Activated CD4-positive, alpha-beta T cell treated with anti-CD3 and anti-CD28 coated beads for 36 hours (primary cell): ENCODE measurements at regions of chr3 and their contacts with region 1.

Region 1: DNA sequence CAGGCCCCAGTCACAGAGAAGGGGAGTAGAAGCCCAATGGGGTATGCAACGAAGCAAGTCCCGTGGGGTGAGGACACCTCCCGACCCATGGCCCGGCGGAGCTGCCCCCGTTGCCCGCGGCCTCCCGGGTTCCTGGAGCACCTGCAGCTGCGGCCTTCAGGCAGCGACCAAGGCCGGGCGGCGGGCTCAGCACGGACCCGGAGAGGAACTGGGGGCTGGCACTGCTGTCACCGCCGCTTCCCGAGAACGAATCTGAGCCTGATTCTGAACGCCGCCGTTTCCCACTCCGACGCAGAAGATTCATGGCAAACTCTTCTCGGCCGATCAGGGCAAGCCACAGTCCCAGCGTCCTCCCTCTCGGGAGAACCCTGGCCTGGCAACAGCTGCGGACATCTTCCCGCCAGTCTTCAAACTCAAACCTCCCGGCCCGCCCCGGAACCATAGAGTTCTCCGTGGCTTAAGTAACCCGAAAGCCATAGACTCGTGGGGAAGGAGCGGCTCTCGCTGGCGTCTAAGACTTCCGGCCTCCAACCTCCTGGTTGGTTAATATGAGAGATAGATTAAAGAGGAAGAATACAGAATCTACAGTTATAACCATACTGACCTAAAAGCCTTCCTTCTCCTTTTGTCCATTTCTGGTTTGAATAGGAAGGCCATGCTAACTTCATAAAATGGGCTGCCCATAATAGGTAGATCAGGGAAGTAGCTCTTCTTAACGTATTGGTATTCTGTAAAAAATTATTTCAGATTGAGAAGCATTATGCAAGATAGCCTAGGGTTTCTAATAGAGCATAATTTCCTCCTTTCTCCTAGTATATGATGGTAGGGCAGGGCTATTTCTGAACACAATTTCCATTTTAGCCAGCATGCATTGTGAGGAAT is at the start of gene POLQ:
- DNase-seq: peak; percentile 92
- ATAC-seq: peak; percentile 98
- H3K4me3 Mint-ChIP-seq: peak within 1 kb of the TSS; percentile 91
- H3K27ac Mint-ChIP-seq: peak within 1 kb of the TSS; percentile 94
- H3K4me1 Mint-ChIP-seq: peaks cover 4% of the 10 kb centered on the region
- H3K27me3 Mint-ChIP-seq: no peaks in the 10 kb centered on the region
- total RNA-seq, gene POLQ: 22.8 to 23.4 TPM

Region 2: GRCh38 chr3:121592856-121593702 is 47.3 kb after region 1 on chr3 and contains the start of gene FBXO40:
- CTCF ChIA-PET with region 1: no interaction called
- POLR2A ChIA-PET with region 1: no interaction called
- intact Hi-C with region 1: no loop called
- DNase-seq: no peak
- ATAC-seq: no peak
- H3K4me3 Mint-ChIP-seq: no peak within 1 kb of the TSS
- H3K27ac Mint-ChIP-seq: no peak within 1 kb of the TSS
- H3K4me1 Mint-ChIP-seq: no peaks in the 10 kb centered on the region
- H3K27me3 Mint-ChIP-seq: peaks cover 2% of the 10 kb centered on the region
- total RNA-seq, gene FBXO40: not detected

Region 3: GRCh38 chr3:121660356-121661171 is 114.7 kb after region 1 on chr3 and contains the start of gene HCLS1:
- CTCF ChIA-PET with region 1: interaction called, 4 read pairs
- POLR2A ChIA-PET with region 1: no interaction called
- intact Hi-C with region 1: loop called (anchors 1 kb)
- DNase-seq: peak; percentile 83
- ATAC-seq: peak; percentile 88
- H3K4me3 Mint-ChIP-seq: peak within 1 kb of the TSS; percentile 95
- H3K27ac Mint-ChIP-seq: peak within 1 kb of the TSS; percentile 97
- H3K4me1 Mint-ChIP-seq: peaks cover 50% of the 10 kb centered on the region
- H3K27me3 Mint-ChIP-seq: no peaks in the 10 kb centered on the region
- total RNA-seq, gene HCLS1: 200 to 235 TPM

Region 4: DNA sequence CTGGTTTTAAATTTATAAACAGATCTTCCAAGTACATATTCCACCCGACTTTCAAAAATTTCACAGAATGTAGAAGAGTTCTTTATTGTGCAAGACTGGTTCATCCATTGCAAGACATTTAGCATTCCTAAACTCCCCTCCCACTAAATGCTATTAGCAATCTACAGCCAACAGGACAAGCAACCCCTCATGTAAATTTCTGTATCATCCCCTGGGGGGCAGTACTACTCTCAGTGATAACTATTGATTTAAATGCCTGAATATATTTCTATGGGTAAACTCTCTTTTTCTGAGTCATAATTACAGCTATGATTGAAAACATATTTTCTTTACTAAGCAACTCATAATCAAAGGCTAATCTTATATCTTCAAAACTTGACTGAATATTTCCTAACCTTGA is 337.7 kb after region 1 on chr3:
- CTCF ChIA-PET with region 1: interaction called, 3 read pairs
- POLR2A ChIA-PET with region 1: no interaction called
- intact Hi-C with region 1: loop called in 1 of 2 experiments (anchors 5 kb)
- DNase-seq: peak; percentile 5
- ATAC-seq: peak; percentile 60
- H3K4me3 Mint-ChIP-seq: no peak overlapping the region
- H3K27ac Mint-ChIP-seq: no peak overlapping the region
- H3K4me1 Mint-ChIP-seq: no peaks in the 10 kb centered on the region
- H3K27me3 Mint-ChIP-seq: no peaks in the 10 kb centered on the region

Region 5: GRCh38 chr3:122101646-122102045 is 555.8 kb after region 1 on chr3:
- CTCF ChIA-PET with region 1: interaction called, 3 read pairs
- POLR2A ChIA-PET with region 1: interaction called, 4 read pairs
- intact Hi-C with region 1: loop called in 1 of 2 experiments (anchors 1 kb)
- DNase-seq: no peak
- ATAC-seq: peak; percentile 54
- H3K4me3 Mint-ChIP-seq: peak overlapping the region; percentile 60
- H3K27ac Mint-ChIP-seq: peak overlapping the region; percentile 79
- H3K4me1 Mint-ChIP-seq: peaks cover 42% of the 10 kb centered on the region
- H3K27me3 Mint-ChIP-seq: no peaks in the 10 kb centered on the region

Region 6: GRCh38 chr3:122383771-122384697 is 838.2 kb after region 1 on chr3 and contains the start of gene FAM162A:
- CTCF ChIA-PET with region 1: interaction called, 3 read pairs
- POLR2A ChIA-PET with region 1: no interaction called
- intact Hi-C with region 1: loop called (anchors 1 to 10 kb)
- DNase-seq: peak; percentile 97
- ATAC-seq: peak; percentile 91
- H3K4me3 Mint-ChIP-seq: peak within 1 kb of the TSS; percentile 92
- H3K27ac Mint-ChIP-seq: peak within 1 kb of the TSS; percentile 98
- H3K4me1 Mint-ChIP-seq: peaks cover 66% of the 10 kb centered on the region
- H3K27me3 Mint-ChIP-seq: no peaks in the 10 kb centered on the region
- total RNA-seq, gene FAM162A: 163 to 181 TPM

Region 7: GRCh38 chr3:122793568-122794416 is 1248.0 kb after region 1 on chr3 and contains the start of gene HSPBAP1:
- CTCF ChIA-PET with region 1: no interaction called
- POLR2A ChIA-PET with region 1: no interaction called
- intact Hi-C with region 1: loop called in 1 of 2 experiments (anchors 10 kb)
- DNase-seq: peak; percentile 93
- ATAC-seq: peak; percentile 67
- H3K4me3 Mint-ChIP-seq: no peak within 1 kb of the TSS
- H3K27ac Mint-ChIP-seq: peak within 1 kb of the TSS; percentile 86
- H3K4me1 Mint-ChIP-seq: peaks cover 32% of the 10 kb centered on the region
- H3K27me3 Mint-ChIP-seq: no peaks in the 10 kb centered on the region
- total RNA-seq, gene HSPBAP1: 3.9 to 4.4 TPM